Activated B cell treated with CpG ODN at 0.5 μM for 24 hours (primary cell): ENCODE measurements at regions of chr5 and their contacts with region 1.

Region 1: DNA sequence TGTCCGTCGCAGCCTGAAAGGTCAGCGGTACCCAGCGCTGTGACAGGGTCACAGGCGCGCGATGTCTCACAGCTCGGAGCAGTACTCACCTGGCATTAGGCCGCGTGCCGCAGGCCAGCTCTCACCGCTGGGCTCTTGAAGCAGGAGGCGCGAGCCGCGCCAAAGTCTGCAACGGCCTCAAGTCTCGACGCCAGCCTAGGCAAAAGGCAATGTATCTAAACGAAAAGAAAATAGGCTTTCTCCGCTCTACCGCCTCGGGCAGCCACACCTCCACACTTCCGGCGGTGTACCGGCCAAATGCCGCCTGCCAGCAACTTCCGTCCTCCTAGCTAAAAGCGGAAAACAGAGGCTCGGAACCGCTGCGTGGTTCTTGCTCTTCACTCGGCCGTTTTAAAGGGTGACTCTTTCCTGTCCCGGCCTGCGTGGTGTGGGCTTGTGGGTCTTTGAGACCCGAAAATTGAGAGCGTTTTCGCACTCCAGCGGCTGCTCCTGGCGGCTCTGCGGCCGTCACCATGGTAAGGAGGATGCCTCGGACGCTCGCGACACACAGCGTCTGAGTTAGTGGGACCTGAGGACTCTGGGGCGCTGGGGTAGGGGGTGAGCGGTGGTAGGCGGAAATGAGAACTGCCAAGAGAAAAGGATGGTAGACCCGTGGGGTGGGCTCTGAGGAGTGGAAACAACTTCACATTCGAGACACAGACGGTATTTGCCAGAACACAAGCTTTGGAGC is at the starts of genes GFM2 and NSA2:
- DNase-seq: peak; percentile 89
- ATAC-seq: peak; percentile 88
- H3K4me3 Mint-ChIP-seq: peak within 1 kb of the TSS; percentile 99
- H3K27ac Mint-ChIP-seq: peak within 1 kb of the TSS; percentile 98
- H3K4me1 Mint-ChIP-seq: peaks cover 36% of the 10 kb centered on the region
- H3K27me3 Mint-ChIP-seq: no peaks in the 10 kb centered on the region
- CTCF ChIP-seq: no peak
- total RNA-seq, gene GFM2: 19.3 and 21.8 TPM in 2 replicates
- total RNA-seq, gene NSA2: 126 and 132 TPM in 2 replicates

Region 2: GRCh38 chr5:73498057-73499008 is 1268.7 kb before region 1 on chr5 and contains the start of gene BTF3:
- CTCF ChIA-PET with region 1: no interaction called
- POLR2A ChIA-PET with region 1: no interaction called
- intact Hi-C with region 1: loop called (anchors 5 kb)
- DNase-seq: peak; percentile 88
- ATAC-seq: peak; percentile 96
- H3K4me3 Mint-ChIP-seq: peak within 1 kb of the TSS; percentile 97
- H3K27ac Mint-ChIP-seq: peak within 1 kb of the TSS; percentile 97
- H3K4me1 Mint-ChIP-seq: peaks cover 33% of the 10 kb centered on the region
- H3K27me3 Mint-ChIP-seq: peaks cover 4% of the 10 kb centered on the region
- CTCF ChIP-seq: no peak
- total RNA-seq, gene BTF3: 753 and 798 TPM in 2 replicates

Region 3: DNA sequence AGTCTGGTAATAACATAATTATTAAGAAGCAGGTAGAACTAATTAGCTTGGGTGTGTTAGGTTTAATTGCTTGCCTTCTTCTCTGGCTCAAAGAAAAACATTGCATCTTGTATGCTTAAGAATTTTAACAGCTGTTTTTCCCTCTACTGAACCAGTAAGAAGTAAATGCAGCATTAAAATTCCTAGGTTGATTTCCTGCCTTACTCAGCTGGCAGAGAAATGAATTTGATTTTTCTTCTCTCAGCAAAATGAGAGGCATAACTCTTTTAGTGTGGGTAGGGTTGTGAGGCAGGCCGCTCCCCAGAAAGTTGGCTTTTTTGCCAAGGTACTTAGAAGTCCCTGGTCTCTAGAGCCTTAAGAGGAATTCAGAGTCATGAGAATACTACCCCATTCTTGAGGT is 838.5 kb before region 1 on chr5:
- CTCF ChIA-PET with region 1: no interaction called
- POLR2A ChIA-PET with region 1: no interaction called
- intact Hi-C with region 1: no loop called
- DNase-seq: no peak
- ATAC-seq: no peak
- H3K4me3 Mint-ChIP-seq: no peak overlapping the region
- H3K27ac Mint-ChIP-seq: no peak overlapping the region
- H3K4me1 Mint-ChIP-seq: no peaks in the 10 kb centered on the region
- H3K27me3 Mint-ChIP-seq: peaks cover 2% of the 10 kb centered on the region
- CTCF ChIP-seq: no peak

Region 4: DNA sequence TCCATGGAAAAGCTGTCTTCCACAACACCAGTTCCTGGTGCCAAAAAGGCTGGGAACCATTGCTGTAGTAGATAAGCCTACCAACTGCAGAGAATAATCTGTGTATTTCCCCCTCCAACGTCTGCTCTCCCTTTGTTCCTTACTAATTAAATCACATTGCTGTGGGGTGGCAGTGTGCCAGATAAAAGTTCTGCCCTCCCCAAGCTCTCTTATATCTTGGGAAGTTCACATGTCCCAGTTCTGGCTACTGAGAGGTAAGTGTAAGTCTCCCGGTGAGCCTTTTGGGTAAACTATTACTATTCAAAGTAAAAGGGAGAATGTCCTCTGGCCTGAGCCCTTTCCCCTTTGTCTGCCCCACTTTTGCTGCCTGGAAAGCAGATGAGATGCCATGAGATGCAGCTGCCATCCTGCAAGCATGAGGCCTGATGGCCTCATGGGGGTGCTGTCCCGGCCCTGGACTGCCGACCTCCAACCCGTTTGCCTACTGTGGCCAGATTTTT is 141.2 kb before region 1 on chr5:
- CTCF ChIA-PET with region 1: no interaction called
- POLR2A ChIA-PET with region 1: no interaction called
- intact Hi-C with region 1: no loop called
- DNase-seq: no peak
- ATAC-seq: no peak
- H3K4me3 Mint-ChIP-seq: no peak overlapping the region
- H3K27ac Mint-ChIP-seq: no peak overlapping the region
- H3K4me1 Mint-ChIP-seq: peaks cover 8% of the 10 kb centered on the region
- H3K27me3 Mint-ChIP-seq: peaks cover 12% of the 10 kb centered on the region
- CTCF ChIP-seq: no peak

Region 5: GRCh38 chr5:74640450-74640953 is 126.5 kb before region 1 on chr5 and contains the start of gene ENC1:
- CTCF ChIA-PET with region 1: no interaction called
- POLR2A ChIA-PET with region 1: interaction called, 5 read pairs
- intact Hi-C with region 1: loop called (anchors 2 kb)
- DNase-seq: peak; percentile 76
- ATAC-seq: peak; percentile 79
- H3K4me3 Mint-ChIP-seq: peak within 1 kb of the TSS; percentile 91
- H3K27ac Mint-ChIP-seq: peak within 1 kb of the TSS; percentile 69
- H3K4me1 Mint-ChIP-seq: peaks cover 32% of the 10 kb centered on the region
- H3K27me3 Mint-ChIP-seq: peaks cover 3% of the 10 kb centered on the region
- CTCF ChIP-seq: no peak
- total RNA-seq, gene ENC1: 6.6 and 7.2 TPM in 2 replicates

Region 6: GRCh38 chr5:74673011-74673790 is 93.8 kb before region 1 on chr5:
- CTCF ChIA-PET with region 1: no interaction called
- POLR2A ChIA-PET with region 1: no interaction called
- intact Hi-C with region 1: no loop called
- DNase-seq: no peak
- ATAC-seq: no peak
- H3K4me3 Mint-ChIP-seq: no peak overlapping the region
- H3K27ac Mint-ChIP-seq: no peak overlapping the region
- H3K4me1 Mint-ChIP-seq: no peaks in the 10 kb centered on the region
- H3K27me3 Mint-ChIP-seq: peaks cover 6% of the 10 kb centered on the region
- CTCF ChIP-seq: no peak

Region 7: DNA sequence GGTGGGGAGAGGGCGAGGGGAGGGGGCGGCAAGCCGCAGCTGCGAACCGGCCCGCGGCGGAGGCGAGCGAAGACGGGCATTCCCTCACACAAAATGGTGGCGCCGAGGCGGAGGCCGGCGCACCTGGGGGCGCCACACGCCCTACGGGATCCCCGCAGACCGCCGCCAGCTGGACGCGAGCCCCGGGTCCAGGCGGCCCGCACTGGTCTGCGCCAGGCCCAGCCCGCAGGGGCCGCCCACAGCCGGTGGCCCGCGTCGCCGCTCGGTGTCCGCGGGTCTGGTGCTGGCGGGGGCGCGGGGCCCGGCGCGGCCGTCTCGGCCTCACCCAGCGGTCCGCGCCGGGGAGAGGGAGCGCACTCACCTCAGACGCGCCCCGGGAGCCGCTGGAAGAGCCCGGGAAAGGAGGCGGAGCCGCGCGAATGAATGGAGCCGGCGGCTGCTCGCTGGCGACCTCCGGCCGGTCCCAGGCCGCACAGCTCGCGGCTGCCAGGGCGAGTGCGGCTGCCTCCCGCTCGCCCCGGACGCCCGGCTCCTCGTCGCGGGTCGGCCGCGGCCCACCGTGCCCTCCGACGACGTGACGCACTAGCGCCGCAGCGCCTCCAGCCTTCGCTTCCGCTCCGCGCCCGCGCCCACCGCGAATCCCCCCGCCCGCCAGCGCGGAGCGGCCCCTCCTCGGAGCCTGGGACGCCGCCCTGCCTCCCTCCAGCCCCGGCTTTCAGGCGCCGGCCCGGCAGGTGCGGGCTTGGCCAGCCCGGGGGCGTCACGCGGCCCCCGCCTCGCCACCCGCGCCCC is 99.0 kb after region 1 on chr5 and contains the start of gene FAM169A:
- CTCF ChIA-PET with region 1: no interaction called
- POLR2A ChIA-PET with region 1: interaction called, 3 read pairs
- intact Hi-C with region 1: loop called (anchors 2 kb)
- DNase-seq: peak; percentile 57
- ATAC-seq: peak; percentile 77
- H3K4me3 Mint-ChIP-seq: peak within 1 kb of the TSS; percentile 87
- H3K27ac Mint-ChIP-seq: peak within 1 kb of the TSS; percentile 80
- H3K4me1 Mint-ChIP-seq: peaks cover 17% of the 10 kb centered on the region
- H3K27me3 Mint-ChIP-seq: peaks cover 27% of the 10 kb centered on the region
- CTCF ChIP-seq: no peak
- total RNA-seq, gene FAM169A: 8.2 TPM in 2 replicates

Region 8: DNA sequence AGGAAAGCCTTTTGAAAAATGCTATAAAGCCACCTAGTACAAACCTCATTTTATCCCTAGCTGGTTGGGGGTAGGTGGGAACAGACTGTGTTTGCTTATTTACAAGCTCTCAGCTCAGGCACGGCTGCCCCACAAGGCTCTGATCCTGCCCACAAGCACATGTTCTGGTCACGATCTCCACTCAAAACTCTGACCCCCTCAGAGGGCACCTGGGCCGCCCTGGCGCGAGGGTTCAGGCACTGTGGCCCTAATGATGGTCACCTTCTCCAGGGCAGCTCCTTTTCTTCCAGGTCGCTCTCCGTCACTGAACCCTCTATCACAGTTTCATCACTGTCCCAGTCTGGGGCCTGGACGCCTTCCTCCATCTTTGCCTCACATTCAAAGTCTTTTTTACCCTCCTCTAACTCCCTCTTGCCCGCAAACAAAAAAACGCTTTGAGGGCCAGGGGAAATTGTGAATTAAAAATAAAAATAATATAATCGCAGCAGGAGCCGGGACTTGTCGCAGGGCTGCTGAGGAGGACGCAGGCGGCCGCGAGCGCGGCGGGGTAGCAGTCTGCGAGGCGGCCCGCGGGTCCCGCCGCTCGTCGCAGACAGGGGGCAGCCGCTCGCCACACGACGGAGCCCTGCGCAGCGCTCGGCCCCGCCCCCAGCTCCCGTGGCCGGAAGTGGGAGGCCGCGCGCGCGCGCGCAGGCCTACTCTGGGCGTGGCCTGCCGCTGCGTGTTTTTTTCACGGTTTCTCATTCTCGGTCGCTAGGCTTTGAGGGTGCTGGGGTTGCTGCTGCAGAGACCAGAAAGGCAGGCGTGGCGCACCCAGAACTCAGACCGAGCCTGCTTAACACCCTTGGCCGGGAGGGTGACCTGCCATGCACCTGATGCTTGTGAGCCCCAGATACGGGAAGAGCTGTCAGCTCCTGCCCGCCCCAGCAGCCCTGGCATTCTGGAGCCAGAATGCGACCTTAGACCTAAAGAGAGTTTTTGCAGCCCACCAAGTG is 469.6 kb after region 1 on chr5 and contains the start of gene ANKRD31:
- CTCF ChIA-PET with region 1: interaction called, 3 read pairs
- POLR2A ChIA-PET with region 1: interaction called, 6 read pairs
- intact Hi-C with region 1: loop called (anchors 10 kb)
- DNase-seq: peak; percentile 89
- ATAC-seq: peak; percentile 99
- H3K4me3 Mint-ChIP-seq: peak within 1 kb of the TSS; percentile 93
- H3K27ac Mint-ChIP-seq: peak within 1 kb of the TSS; percentile 83
- H3K4me1 Mint-ChIP-seq: peaks cover 9% of the 10 kb centered on the region
- H3K27me3 Mint-ChIP-seq: peaks cover 3% of the 10 kb centered on the region
- CTCF ChIP-seq: peak; percentile 62
- total RNA-seq, gene ANKRD31: 0.13 and 0.15 TPM in 2 replicates

Region 9: GRCh38 chr5:75717082-75717922 is 950.3 kb after region 1 on chr5 and contains the start of gene POC5:
- CTCF ChIA-PET with region 1: no interaction called
- POLR2A ChIA-PET with region 1: no interaction called
- intact Hi-C with region 1: loop called (anchors 10 kb)
- DNase-seq: peak; percentile 96
- ATAC-seq: peak; percentile 92
- H3K4me3 Mint-ChIP-seq: peak within 1 kb of the TSS; percentile 98
- H3K27ac Mint-ChIP-seq: peak within 1 kb of the TSS; percentile 98
- H3K4me1 Mint-ChIP-seq: peaks cover 32% of the 10 kb centered on the region
- H3K27me3 Mint-ChIP-seq: peaks cover 2% of the 10 kb centered on the region
- CTCF ChIP-seq: no peak
- total RNA-seq, gene POC5: 27.6 and 29.8 TPM in 2 replicates

Region 10: DNA sequence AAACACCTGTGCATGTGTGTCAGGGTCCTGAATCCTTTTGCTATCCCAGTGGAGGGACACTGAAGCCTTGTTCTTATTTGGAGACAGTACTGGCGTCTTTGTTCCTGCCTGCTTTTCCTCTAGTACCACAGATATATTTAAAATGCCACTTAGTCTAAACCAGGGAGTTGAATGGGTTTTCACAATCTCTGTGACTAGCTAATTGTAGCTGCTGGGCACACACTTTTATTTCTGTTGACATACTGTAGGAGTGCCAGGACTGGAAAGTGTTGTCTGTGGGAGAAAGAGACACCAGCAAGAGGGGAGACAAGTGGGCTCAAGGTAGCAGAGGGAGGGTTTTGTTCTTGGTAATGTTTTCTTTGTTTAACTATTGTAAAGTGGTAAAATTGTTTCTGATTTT is 1142.2 kb after region 1 on chr5:
- CTCF ChIA-PET with region 1: no interaction called
- POLR2A ChIA-PET with region 1: no interaction called
- intact Hi-C with region 1: no loop called
- DNase-seq: no peak
- ATAC-seq: no peak
- H3K4me3 Mint-ChIP-seq: no peak overlapping the region
- H3K27ac Mint-ChIP-seq: no peak overlapping the region
- H3K4me1 Mint-ChIP-seq: no peaks in the 10 kb centered on the region
- H3K27me3 Mint-ChIP-seq: peaks cover 9% of the 10 kb centered on the region
- CTCF ChIP-seq: no peak